ENCODE measurements at regions of chr3 and their contacts with region 1.

Region 1: GRCh38 chr3:141000027-141000663 is 51.0 kb upstream of the SPSB4 start:
- DNase-seq: peak; percentile 43
- CTCF ChIP-seq: peak; percentile 80

Region 2: DNA sequence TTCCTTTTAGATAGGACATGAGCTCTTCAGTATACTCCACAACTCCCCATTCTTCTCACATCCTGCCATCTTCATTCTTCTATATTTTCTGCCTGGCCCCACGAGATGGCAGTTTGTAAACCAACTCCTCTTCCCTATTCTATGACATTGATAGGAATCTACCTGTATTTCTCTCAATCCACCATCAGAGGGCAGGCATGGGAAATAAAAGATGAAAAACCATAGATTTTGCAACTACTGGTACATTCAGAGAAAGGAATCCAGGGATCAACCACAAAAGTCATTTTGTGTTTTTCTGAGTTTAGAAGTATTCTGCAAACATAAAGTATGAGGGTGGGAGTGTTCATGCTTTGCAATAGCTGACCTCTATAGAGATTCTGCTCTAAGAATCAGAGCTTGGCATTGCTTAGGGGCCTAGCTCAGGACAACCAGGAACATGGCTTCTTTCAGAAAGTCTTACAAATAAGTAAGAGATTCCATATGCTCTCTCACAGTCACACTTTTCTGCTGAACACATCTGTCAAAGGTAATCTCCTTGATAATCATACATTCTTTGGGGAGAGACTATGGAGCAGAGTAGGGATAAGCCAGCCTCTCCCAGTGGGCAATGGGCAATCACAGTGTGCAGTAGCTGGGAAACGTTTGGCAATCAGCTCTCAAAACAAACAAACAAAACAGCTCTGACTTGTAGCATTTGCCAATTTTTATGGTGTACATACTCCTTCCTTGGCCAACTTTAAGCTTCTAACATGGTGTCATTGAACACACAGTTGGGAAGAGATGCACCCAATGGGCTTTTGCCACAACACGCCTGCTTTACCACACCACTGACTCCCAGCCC is 101.6 kb before region 1 on chr3:
- in situ Hi-C with region 1: no loop called
- DNase-seq: peak; percentile 39
- CTCF ChIP-seq: peak; percentile 52

Region 3: DNA sequence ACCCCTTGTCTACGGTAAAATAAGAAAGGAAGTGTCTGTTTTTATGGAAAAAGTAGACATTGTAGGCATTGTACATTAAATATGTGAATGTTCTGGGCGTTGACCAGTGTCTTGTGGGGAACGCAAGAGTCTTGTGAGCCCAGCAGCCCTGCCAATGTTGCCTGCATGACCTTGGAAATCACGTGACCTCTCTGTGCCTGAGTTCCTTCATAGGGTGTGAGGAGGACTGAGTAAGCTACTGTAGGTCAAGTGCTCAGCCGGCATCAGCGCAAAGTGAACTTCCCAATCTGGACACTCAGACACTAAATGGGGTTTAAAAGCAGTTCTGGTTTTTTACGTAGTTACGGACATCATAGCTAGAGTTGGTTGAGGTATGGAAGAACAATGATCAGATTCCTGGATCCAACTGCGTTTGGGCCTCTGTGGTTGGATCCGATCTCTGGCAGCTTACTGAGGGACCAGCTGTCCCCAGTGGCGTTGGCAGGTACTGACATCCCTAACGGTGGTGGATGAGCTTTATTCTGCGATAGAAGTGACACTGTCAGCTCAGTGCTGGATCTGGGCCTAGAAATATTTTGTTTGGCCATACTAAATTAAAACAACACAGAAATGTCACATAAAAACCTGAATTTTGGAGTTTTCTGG is 114.8 kb after region 1 on chr3:
- in situ Hi-C with region 1: loop called (anchors 10 kb)
- DNase-seq: no peak
- CTCF ChIP-seq: no peak

Measured in GM13976 (cell line).